MCF 10A (cell line): ENCODE measurements at regions of chr5 and their contacts with region 1.

Region 1: GRCh38 chr5:135457424-135458071 is 5.4 kb upstream of the TIFAB start:
- DNase-seq: peak; percentile 88
- H3K4me3 Mint-ChIP-seq: no peak overlapping the region
- H3K27ac Mint-ChIP-seq: no peak overlapping the region
- H3K4me1 Mint-ChIP-seq: peaks cover 21% of the 10 kb centered on the region
- H3K27me3 Mint-ChIP-seq: peaks cover 18% of the 10 kb centered on the region
- CTCF ChIP-seq: peak; percentile 90

Region 2: GRCh38 chr5:135271533-135272310 is 185.8 kb before region 1 on chr5:
- CTCF ChIA-PET with region 1: no interaction called
- POLR2A ChIA-PET with region 1: no interaction called
- intact Hi-C with region 1: no loop called
- DNase-seq: no peak
- H3K4me3 Mint-ChIP-seq: no peak overlapping the region
- H3K27ac Mint-ChIP-seq: no peak overlapping the region
- H3K4me1 Mint-ChIP-seq: no peaks in the 10 kb centered on the region
- H3K27me3 Mint-ChIP-seq: no peaks in the 10 kb centered on the region
- CTCF ChIP-seq: no peak

Region 3: DNA sequence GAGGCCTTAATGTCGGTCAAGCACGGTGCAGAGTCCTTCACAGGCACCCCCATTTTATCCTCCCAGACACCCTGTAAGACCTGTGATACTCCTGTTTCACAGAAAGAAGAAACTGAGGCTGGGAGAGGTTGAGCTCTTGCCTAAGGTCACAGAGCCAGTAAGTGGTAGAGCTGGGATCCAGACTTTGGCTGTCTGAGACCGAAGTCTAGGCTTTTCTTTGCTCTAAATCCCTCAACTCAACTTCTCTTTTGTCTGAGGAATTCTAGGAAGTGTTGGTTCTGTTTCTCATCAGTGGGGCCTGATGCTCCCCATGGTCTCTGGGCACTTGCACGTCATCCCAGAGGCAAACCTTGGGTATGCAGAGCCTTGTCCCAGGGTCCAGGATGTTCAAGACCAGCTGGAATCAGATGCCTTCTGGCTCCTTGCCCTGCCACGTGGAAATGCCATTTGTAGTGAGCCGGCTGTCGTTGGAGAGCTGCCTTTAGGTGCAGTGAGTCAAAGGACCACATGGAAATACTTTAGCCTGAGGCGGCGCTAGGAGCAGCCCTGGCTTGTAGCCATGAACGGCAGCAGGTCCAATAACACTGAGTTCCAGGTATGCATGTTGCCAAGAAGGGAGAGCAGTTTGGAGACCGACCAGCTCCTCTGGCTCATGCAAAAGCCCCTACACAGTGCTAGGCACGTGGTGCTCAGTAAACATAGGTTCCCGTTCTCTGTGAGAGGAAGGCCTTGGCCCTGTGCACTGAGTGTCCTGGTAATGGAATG is 19.6 kb before region 1 on chr5:
- CTCF ChIA-PET with region 1: interaction called, 28 read pairs
- POLR2A ChIA-PET with region 1: interaction called, 3 read pairs
- intact Hi-C with region 1: no loop called
- DNase-seq: peak; percentile 74
- H3K4me3 Mint-ChIP-seq: no peak overlapping the region
- H3K27ac Mint-ChIP-seq: no peak overlapping the region
- H3K4me1 Mint-ChIP-seq: peaks cover 10% of the 10 kb centered on the region
- H3K27me3 Mint-ChIP-seq: no peaks in the 10 kb centered on the region
- CTCF ChIP-seq: no peak

Region 4: GRCh38 chr5:135476615-135477582 is 19.4 kb after region 1 on chr5:
- CTCF ChIA-PET with region 1: interaction called, 114 read pairs
- POLR2A ChIA-PET with region 1: no interaction called
- intact Hi-C with region 1: no loop called
- DNase-seq: no peak
- H3K4me3 Mint-ChIP-seq: no peak overlapping the region
- H3K27ac Mint-ChIP-seq: no peak overlapping the region
- H3K4me1 Mint-ChIP-seq: no peaks in the 10 kb centered on the region
- H3K27me3 Mint-ChIP-seq: no peaks in the 10 kb centered on the region
- CTCF ChIP-seq: no peak

Region 5: DNA sequence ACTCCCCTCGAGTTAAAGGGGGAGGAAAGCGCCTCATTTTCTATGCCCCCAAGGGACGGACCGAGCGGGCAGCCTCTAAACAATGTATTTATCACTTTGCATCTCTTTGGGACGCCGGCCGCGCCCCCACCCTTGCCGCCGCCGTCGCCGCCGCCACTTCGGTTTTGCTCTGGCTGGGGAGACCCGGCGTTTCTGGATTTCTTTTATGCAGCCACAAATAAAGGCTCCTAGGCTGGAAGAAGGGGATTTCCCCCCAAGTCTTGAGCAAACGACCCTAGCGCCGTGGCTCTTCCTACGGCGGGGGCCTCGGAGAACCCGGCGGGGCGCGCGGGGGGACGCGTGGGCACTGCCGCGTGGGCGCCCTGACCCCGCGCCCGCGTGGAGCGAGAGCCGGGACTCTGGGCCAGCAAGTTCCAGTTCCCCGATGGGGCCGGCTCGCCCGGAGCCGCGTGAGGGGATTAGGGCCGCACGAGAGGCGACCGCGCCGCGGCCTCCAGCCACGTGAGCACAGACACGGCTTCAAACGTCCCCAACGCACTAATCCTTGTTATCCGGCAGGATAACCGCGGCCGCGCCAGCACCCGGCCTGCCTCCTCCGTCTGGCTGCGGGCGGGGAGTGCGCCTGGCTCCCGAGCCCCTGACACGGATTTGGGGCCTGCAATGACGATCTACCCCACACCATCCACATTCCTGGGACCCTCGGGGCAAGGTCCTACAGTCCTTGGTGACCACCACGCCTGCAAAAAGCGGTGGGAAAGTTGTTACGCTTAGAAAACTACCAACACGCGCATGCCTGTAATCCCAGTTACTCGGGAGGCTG is 86.1 kb after region 1 on chr5:
- CTCF ChIA-PET with region 1: interaction called, 2,166 read pairs
- POLR2A ChIA-PET with region 1: interaction called, 88 read pairs
- intact Hi-C with region 1: no loop called
- DNase-seq: no peak
- H3K4me3 Mint-ChIP-seq: no peak overlapping the region
- H3K27ac Mint-ChIP-seq: no peak overlapping the region
- H3K4me1 Mint-ChIP-seq: no peaks in the 10 kb centered on the region
- H3K27me3 Mint-ChIP-seq: no peaks in the 10 kb centered on the region
- CTCF ChIP-seq: no peak

Region 6: GRCh38 chr5:135829681-135830383 is 372.3 kb after region 1 on chr5:
- CTCF ChIA-PET with region 1: interaction called, 14 read pairs
- POLR2A ChIA-PET with region 1: no interaction called
- intact Hi-C with region 1: loop called (anchors 1 kb)
- DNase-seq: peak; percentile 83
- H3K4me3 Mint-ChIP-seq: no peak overlapping the region
- H3K27ac Mint-ChIP-seq: no peak overlapping the region
- H3K4me1 Mint-ChIP-seq: peaks cover 5% of the 10 kb centered on the region
- H3K27me3 Mint-ChIP-seq: peaks cover 50% of the 10 kb centered on the region
- CTCF ChIP-seq: peak; percentile 96